Colonic mucosa (tissue), 4 donors: ENCODE measurements at regions of chr12 and their contacts with region 1.

Region 1: DNA sequence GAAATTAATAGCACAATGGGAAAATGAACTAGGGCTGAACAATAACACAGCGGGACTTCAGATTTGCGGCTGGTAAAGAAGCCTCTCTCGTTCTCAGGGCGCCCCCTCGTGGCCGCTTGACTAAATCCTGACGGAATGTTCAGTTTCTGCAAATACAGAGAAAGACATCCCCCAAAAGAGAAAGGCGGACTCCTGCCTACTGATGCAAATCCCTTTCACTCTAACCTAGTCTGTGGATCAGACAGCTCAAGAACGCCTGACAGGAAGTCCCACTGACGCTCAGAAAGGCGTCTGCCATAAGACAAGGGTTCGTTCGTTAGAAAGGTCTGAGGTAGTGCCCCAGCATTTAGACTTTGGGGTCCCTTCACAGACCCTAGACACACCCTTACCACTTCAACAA is 2.5 kb downstream of the NUAK1 start:
- DNase-seq: peak; percentile 91
- H3K4me3 ChIP-seq: no peak overlapping the region
- H3K27ac ChIP-seq: no peak overlapping the region
- H3K4me1 ChIP-seq: no peaks in the 10 kb centered on the region
- H3K27me3 ChIP-seq: peaks cover 11% of the 10 kb centered on the region
- CTCF ChIP-seq: peak; percentile 68

Region 2: DNA sequence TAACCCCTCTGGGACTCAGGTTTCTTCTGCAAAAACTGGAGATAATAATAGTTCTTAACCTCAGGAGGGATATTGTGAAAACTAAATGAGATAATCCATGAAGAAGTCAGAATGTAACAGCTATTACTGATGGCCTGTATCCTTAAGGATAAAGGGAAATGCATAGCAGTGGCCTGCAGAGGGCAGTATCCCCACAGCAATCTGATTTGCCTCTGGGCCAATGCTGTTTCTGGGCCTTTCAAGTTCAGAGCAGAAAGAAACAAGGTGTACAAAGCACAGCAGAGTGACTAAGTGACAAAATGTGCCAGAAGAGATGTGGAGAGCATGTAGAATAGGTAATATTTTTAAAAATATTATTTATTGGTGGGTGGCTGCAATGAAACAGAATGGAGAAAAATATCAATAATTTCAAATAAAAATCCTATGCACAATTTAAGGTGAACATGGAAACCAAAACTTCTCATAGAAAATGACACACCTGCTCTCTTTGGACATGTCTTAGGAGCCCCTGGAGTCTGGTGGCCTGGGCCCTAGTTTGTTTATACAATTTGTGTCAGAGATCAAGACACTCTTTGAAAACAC is 715.5 kb before region 1 on chr12:
- intact Hi-C with region 1: loop called (anchors 5 kb)
- DNase-seq: peak; percentile 72
- H3K4me3 ChIP-seq: no peak overlapping the region
- H3K27ac ChIP-seq: no peak overlapping the region
- H3K4me1 ChIP-seq: no peaks in the 10 kb centered on the region
- H3K27me3 ChIP-seq: no peaks in the 10 kb centered on the region
- CTCF ChIP-seq: peak; percentile 86

Region 3: GRCh38 chr12:105705765-105706164 is 430.5 kb before region 1 on chr12:
- intact Hi-C with region 1: loop called (anchors 5 kb)
- DNase-seq: peak; percentile 42
- H3K4me3 ChIP-seq: no peak overlapping the region
- H3K27ac ChIP-seq: no peak overlapping the region
- H3K4me1 ChIP-seq: no peaks in the 10 kb centered on the region
- H3K27me3 ChIP-seq: no peaks in the 10 kb centered on the region
- CTCF ChIP-seq: peak; percentile 58

Region 4: GRCh38 chr12:105805735-105806399 is 330.4 kb before region 1 on chr12:
- intact Hi-C with region 1: no loop called
- DNase-seq: no peak
- H3K4me3 ChIP-seq: no peak overlapping the region
- H3K27ac ChIP-seq: no peak overlapping the region
- H3K4me1 ChIP-seq: no peaks in the 10 kb centered on the region
- H3K27me3 ChIP-seq: no peaks in the 10 kb centered on the region
- CTCF ChIP-seq: no peak

Region 5: DNA sequence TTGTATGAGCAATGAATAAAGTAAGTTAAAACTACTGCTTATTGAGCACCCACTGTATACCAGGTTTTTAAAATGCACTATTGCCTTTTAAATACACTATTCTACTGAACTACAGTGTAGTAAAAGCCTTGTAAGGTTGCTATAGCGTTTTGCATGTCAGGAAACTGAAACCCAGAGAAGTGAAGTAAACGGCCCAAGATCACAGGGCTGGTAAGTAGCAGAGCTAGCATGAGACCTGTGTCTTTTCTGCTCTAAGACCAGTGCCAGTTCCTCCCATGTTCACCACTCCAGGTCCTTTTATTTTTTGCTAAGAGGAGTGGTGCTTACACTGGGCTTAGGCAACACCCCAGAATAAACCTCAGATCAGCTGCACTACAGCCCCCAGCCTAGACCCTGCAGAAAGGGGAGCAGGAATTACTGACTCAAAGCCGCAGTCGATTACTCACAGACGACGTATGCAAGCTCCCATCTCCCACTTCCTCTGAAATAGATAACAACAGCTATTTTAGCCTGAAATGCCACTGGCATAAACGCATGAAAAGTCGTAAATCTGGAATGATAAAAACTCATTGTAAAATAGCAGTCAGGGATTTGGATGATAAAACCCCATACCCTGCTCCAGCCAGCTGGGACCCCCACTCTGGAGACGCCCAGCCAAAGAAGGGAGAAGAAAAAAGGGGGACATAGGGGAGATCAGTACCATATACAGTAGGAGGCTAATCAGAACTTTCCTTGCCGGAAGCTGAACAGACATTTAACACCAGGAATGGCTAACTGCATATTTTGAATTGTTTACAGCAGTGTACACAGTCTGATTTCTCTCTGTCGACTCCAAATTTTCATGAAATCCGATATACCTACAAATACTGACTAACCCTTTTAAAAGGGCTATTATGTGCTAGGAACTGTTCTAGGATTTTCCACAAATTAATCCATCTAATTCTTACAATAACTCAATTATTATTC is 105.8 kb before region 1 on chr12:
- intact Hi-C with region 1: loop called (anchors 5 kb)
- DNase-seq: no peak
- H3K4me3 ChIP-seq: no peak overlapping the region
- H3K27ac ChIP-seq: no peak overlapping the region
- H3K4me1 ChIP-seq: no peaks in the 10 kb centered on the region
- H3K27me3 ChIP-seq: no peaks in the 10 kb centered on the region
- CTCF ChIP-seq: no peak